T-cell (primary cell): ENCODE measurements at regions of chr7 and their contacts with region 1.

Region 1: DNA sequence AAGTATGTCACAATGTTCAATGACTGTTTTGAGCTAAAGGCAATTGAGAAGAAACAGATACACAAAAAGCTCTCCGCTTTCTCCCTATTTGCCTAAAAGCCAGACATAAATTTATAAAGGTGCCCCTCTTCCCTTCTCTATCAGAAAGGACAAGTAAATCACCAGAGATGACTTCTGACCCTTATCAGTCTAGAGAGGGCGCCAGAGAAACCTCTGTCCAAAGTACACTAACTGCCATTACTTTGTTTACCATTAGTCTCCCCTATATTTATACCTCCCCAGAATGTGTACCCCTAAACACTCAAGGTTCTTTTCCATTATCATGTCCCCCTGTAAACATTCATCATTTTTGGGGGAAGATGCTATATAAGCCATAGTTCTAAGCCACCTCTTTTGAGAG is 49.3 kb downstream of the TPK1 start:
- DNase-seq: peak in 1 of 35 experiments; percentile 48
- ATAC-seq: peak in 3 of 4 experiments; percentile 36 to 64 (median 57)
- H3K4me3 ChIP-seq: no peak overlapping the region
- H3K4me3 Mint-ChIP-seq: no peak overlapping the region
- H3K27ac ChIP-seq: no peak overlapping the region
- H3K27ac Mint-ChIP-seq: no peak overlapping the region
- H3K4me1 ChIP-seq: no peaks in the 10 kb centered on the region
- H3K4me1 Mint-ChIP-seq: peaks cover 19 to 22% (median 22%) of the 10 kb centered on the region in 3 donors
- H3K27me3 ChIP-seq: no peaks in the 10 kb centered on the region
- H3K27me3 Mint-ChIP-seq: no peaks in the 10 kb centered on the region

Region 2: DNA sequence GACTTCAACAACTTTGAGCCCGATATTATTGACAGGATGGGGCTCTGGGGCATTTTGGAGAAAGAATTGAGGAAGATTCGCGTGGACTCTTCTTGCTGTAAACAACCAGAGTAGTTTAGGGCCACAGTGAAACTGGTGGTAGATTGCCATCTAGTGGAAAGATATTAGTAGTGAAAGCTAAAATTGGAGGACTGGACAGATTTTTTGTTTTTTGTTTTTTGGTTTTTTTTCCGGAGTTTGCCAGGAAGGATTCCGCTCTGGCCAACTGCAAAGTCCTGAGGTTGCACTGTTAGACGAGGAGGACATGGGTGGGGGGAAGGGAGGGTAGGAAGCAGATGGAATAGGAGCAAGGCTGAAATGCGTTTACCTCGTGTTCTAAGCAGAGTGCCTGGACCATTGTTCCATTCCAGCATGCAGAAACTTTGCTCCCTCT is 394.7 kb before region 1 on chr7:
- CTCF ChIA-PET with region 1: no interaction called
- POLR2A ChIA-PET with region 1: no interaction called
- DNase-seq: peak in 15 of 35 experiments; percentile 3 to 73 (median 15)
- ATAC-seq: peak; percentile 63 to 78 (median 71)
- H3K4me3 ChIP-seq: no peak overlapping the region
- H3K4me3 Mint-ChIP-seq: peak overlapping the region; percentile 28 to 50 (median 42)
- H3K27ac ChIP-seq: no peak overlapping the region
- H3K27ac Mint-ChIP-seq: peak overlapping the region in 1 of 2 donors; percentile 29
- H3K4me1 ChIP-seq: peaks cover 3 to 5% of the 10 kb centered on the region in 2 experiments
- H3K4me1 Mint-ChIP-seq: peaks cover 4 to 6% (median 4%) of the 10 kb centered on the region in 3 donors
- H3K27me3 ChIP-seq: no peaks in the 10 kb centered on the region
- H3K27me3 Mint-ChIP-seq: no peaks in the 10 kb centered on the region

Region 3: GRCh38 chr7:144738708-144739314 is 47.7 kb before region 1 on chr7:
- CTCF ChIA-PET with region 1: interaction called in 1 of 2 experiments, 11 read pairs
- POLR2A ChIA-PET with region 1: no interaction called
- DNase-seq: peak in 20 of 35 experiments; percentile 1 to 61 (median 10)
- ATAC-seq: peak in 3 of 4 experiments; percentile 57 to 62 (median 58)
- H3K4me3 ChIP-seq: no peak overlapping the region
- H3K4me3 Mint-ChIP-seq: no peak overlapping the region
- H3K27ac ChIP-seq: no peak overlapping the region
- H3K27ac Mint-ChIP-seq: no peak overlapping the region
- H3K4me1 ChIP-seq: no peaks in the 10 kb centered on the region
- H3K4me1 Mint-ChIP-seq: peaks cover 2 to 6% (median 6%) of the 10 kb centered on the region in 3 donors
- H3K27me3 ChIP-seq: no peaks in the 10 kb centered on the region
- H3K27me3 Mint-ChIP-seq: no peaks in the 10 kb centered on the region

Region 4: GRCh38 chr7:144775749-144776148 is 10.8 kb before region 1 on chr7:
- CTCF ChIA-PET with region 1: no interaction called
- POLR2A ChIA-PET with region 1: no interaction called
- DNase-seq: no peak
- ATAC-seq: no peak
- H3K4me3 ChIP-seq: no peak overlapping the region
- H3K4me3 Mint-ChIP-seq: no peak overlapping the region
- H3K27ac ChIP-seq: no peak overlapping the region
- H3K27ac Mint-ChIP-seq: no peak overlapping the region
- H3K4me1 ChIP-seq: peaks cover 3 to 18% of the 10 kb centered on the region in 2 experiments
- H3K4me1 Mint-ChIP-seq: peaks cover 47 to 51% (median 48%) of the 10 kb centered on the region in 3 donors
- H3K27me3 ChIP-seq: no peaks in the 10 kb centered on the region
- H3K27me3 Mint-ChIP-seq: no peaks in the 10 kb centered on the region